ENCODE measurements at regions of chr11 and their contacts with region 1.

Region 1: DNA sequence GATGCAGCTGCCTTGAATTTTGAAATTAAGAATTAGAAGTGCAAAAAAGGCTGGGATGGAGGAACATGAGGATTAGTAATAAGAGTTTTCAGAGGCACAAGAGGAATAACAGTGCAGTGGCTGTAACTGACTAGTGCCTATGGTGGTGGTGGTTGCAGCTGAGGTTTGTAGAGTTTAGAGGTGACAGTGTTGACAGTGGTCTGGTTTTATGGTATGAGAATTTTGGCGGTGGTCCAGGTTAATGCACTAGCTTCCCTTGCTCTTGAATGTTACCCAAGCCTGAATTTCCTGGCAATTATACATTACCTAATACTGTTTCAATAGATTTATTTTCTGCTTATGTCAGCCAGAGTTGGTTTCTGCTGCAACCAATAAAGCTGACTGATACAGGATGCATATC is 112.8 kb upstream of the C11orf87 start:
- DNase-seq: no peak
- H3K4me3 Mint-ChIP-seq: no peak overlapping the region
- H3K27ac Mint-ChIP-seq: no peak overlapping the region
- H3K4me1 Mint-ChIP-seq: no peaks in the 10 kb centered on the region
- H3K27me3 Mint-ChIP-seq: no peaks in the 10 kb centered on the region

Region 2: DNA sequence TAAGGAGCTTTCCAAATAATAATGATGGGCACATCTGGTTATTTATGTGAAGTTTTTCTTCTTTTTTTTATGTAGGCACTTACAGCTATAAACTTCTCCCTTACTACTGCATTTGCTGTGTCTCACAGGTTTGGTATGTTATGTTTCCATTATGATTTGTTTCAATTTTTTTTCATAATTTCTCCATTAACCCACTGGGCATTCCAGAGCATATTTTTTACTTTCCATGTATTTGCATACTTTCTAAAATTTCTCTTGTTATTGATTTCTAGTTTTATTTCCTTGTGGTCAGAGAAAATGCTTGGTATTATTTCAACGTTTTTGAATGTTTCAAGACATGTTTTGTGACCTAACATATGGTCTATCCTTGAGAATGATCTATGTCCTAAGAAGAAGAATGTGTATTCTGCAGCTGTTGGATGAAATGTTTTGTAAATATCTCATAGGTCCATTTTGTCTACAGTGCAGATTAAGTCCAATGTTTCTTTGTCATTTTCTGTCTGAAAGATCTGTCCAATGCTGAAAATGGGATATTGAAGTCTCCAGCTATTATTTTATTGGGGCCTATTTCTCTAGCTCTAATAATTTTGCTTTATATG is 282.2 kb before region 1 on chr11:
- intact Hi-C with region 1: loop called (anchors 5 kb)
- DNase-seq: no peak
- H3K4me3 Mint-ChIP-seq: no peak overlapping the region
- H3K27ac Mint-ChIP-seq: no peak overlapping the region
- H3K4me1 Mint-ChIP-seq: no peaks in the 10 kb centered on the region
- H3K27me3 Mint-ChIP-seq: no peaks in the 10 kb centered on the region

Region 3: DNA sequence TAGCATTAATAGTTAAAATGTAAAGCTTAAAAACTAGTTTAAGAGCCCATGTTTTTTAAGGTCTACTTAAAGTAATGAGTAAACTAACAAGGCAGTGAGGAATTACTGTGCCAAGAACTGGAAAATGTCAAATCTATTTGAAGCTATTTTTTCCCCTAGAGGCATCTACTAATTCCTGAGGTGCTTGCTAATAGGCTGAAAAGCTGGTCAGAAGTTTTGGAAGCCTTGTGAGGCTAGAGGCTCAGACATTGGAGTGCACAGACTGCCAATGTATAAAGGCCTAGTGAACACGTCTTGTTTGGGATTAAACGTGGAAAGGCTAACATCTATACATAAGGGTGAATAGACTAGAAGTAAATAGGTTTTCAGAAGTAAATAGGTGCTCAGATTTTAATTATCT is 23.7 kb before region 1 on chr11:
- intact Hi-C with region 1: no loop called
- DNase-seq: no peak
- H3K4me3 Mint-ChIP-seq: no peak overlapping the region
- H3K27ac Mint-ChIP-seq: no peak overlapping the region
- H3K4me1 Mint-ChIP-seq: no peaks in the 10 kb centered on the region
- H3K27me3 Mint-ChIP-seq: no peaks in the 10 kb centered on the region

Region 4: DNA sequence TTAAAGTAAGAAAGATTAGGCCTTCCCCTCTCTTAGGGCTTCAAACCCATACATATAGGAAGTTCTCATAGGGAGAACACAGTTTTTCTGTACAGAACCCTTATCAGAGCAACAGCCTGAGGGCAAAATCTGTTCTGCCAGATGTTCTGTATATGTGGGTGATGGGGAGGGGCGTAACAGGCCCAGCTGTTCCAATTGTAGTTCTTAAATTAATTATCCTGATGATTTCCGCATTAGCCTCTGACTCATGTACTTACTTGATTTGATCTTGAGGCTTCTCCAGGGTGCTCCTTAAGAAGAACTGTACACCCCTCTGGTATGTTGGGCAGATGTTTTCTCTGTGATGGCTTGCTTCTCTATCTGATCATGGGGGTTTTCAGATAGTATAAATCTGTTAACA is 10.3 kb before region 1 on chr11:
- intact Hi-C with region 1: no loop called
- DNase-seq: no peak
- H3K4me3 Mint-ChIP-seq: no peak overlapping the region
- H3K27ac Mint-ChIP-seq: no peak overlapping the region
- H3K4me1 Mint-ChIP-seq: no peaks in the 10 kb centered on the region
- H3K27me3 Mint-ChIP-seq: no peaks in the 10 kb centered on the region